ENCODE measurements at regions of chr4 and their contacts with region 1.

Region 1: DNA sequence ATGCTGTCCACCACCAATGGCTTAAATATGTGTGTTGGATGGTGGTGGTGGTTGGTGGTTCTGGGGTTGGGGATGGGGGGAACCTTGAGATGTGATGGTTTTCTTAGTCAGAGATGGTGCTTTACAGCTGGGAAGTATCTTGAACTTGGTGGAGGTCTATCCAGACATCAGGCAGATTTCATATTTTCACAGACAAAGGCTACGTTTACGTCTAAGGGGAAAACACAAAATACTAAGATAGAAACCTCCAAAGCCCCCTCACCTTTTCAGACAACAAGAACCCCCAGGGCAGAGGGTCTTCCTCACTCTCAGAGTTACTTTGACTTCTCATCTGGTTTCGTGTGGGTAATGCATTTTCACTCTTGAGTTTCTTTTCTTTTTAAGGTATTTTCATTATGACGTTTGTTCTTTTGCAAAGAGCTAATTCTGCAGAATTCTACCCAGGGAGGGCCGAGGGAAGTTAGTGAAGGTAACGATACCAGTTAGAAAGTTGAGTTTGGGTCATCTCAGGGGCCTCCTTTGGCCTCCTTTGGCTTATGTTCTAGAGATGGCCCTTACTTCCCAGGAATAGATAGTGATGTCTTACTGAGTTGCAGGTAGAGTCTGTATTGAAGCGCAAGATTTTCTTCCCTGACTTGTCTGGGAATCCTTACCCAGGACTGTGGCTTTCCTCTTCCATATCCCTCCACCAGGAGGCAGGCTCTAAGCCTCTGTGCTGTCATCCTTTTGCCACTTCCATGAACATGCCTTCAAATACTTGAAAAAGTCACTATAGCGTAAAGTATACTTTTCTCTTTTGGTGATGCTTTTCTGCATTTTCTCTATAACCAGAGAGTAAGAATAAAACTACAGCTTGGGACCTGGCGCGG is 31.9 kb downstream of the RHOH start:
- DNase-seq: peak in 3 of 9 experiments; percentile 35 to 65 (median 43)
- ATAC-seq: no peak
- H3K4me3 ChIP-seq: peak overlapping the region; percentile 3 to 25
- H3K4me3 Mint-ChIP-seq: peak overlapping the region; percentile 82
- H3K27ac ChIP-seq: peak overlapping the region; percentile 29 to 96
- H3K27ac Mint-ChIP-seq: peak overlapping the region; percentile 95
- H3K4me1 ChIP-seq: peaks cover 95% of the 10 kb centered on the region
- H3K4me1 Mint-ChIP-seq: peaks cover 94% of the 10 kb centered on the region
- H3K27me3 ChIP-seq: no peaks in the 10 kb centered on the region
- H3K27me3 Mint-ChIP-seq: no peaks in the 10 kb centered on the region
- CTCF ChIP-seq: peak; percentile 42

Region 2: DNA sequence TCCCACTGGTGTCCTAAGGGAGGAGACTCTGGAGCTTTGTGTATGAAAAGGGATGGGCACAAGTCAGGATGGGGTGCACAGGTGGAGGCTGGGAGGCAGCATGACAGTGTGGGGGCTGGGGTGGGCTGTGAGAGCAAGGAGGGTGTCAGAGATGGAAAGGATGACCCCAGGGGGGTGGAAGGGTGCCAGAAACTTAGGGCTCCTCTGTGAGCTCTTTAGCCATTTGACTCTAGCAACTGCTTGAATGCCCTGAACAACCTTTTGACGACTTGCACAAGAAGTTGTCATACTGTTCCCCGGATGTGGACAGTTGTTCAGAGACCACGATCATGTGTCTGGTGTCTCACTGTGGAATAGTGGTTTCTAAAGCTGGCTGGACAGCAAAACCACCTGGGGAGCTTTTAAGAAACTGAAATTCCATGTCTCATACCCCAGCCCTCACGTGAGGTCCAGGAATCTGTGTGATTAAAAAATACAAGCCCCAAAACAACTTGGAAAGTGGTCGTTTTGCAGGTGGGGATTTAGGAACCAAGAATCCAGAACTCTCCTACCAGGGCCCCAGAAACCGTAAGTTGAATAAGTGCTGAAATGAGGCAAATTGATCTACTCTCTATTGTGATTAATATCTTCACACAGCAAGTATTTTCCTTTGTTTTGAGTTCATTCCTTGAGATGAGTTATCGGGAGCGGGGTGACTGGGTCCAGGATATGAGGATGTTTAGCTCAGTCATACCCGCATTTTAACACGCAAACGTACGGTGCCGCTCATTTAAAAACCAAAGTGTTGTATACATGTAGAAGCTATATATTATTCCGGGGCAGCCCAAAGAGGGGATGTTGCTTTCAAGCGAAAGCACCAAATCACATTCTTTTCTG is 28.5 kb before region 1 on chr4:
- CTCF ChIA-PET with region 1: interaction called, 114 read pairs
- POLR2A ChIA-PET with region 1: interaction called, 210 read pairs
- intact Hi-C with region 1: no loop called
- DNase-seq: peak in 7 of 9 experiments; percentile 41 to 88 (median 67)
- ATAC-seq: peak; percentile 24
- H3K4me3 ChIP-seq: peak overlapping the region; percentile 83 to 87
- H3K4me3 Mint-ChIP-seq: peak overlapping the region; percentile 100
- H3K27ac ChIP-seq: peak overlapping the region; percentile 89 to 96
- H3K27ac Mint-ChIP-seq: peak overlapping the region; percentile 100
- H3K4me1 ChIP-seq: peaks cover 25% of the 10 kb centered on the region
- H3K4me1 Mint-ChIP-seq: peaks cover 41% of the 10 kb centered on the region
- H3K27me3 ChIP-seq: no peaks in the 10 kb centered on the region
- H3K27me3 Mint-ChIP-seq: no peaks in the 10 kb centered on the region
- CTCF ChIP-seq: no peak

Region 3: GRCh38 chr4:40205259-40206198 is 23.2 kb before region 1 on chr4:
- CTCF ChIA-PET with region 1: interaction called, 114 read pairs
- POLR2A ChIA-PET with region 1: interaction called, 210 read pairs
- intact Hi-C with region 1: no loop called
- DNase-seq: peak in 2 of 9 experiments; percentile 56 to 71
- ATAC-seq: peak; percentile 32
- H3K4me3 ChIP-seq: peak overlapping the region; percentile 30 to 83
- H3K4me3 Mint-ChIP-seq: peak overlapping the region; percentile 97
- H3K27ac ChIP-seq: peak overlapping the region; percentile 22 to 96
- H3K27ac Mint-ChIP-seq: peak overlapping the region; percentile 92
- H3K4me1 ChIP-seq: peaks cover 47% of the 10 kb centered on the region
- H3K4me1 Mint-ChIP-seq: peaks cover 70% of the 10 kb centered on the region
- H3K27me3 ChIP-seq: no peaks in the 10 kb centered on the region
- H3K27me3 Mint-ChIP-seq: no peaks in the 10 kb centered on the region
- CTCF ChIP-seq: no peak

Region 4: DNA sequence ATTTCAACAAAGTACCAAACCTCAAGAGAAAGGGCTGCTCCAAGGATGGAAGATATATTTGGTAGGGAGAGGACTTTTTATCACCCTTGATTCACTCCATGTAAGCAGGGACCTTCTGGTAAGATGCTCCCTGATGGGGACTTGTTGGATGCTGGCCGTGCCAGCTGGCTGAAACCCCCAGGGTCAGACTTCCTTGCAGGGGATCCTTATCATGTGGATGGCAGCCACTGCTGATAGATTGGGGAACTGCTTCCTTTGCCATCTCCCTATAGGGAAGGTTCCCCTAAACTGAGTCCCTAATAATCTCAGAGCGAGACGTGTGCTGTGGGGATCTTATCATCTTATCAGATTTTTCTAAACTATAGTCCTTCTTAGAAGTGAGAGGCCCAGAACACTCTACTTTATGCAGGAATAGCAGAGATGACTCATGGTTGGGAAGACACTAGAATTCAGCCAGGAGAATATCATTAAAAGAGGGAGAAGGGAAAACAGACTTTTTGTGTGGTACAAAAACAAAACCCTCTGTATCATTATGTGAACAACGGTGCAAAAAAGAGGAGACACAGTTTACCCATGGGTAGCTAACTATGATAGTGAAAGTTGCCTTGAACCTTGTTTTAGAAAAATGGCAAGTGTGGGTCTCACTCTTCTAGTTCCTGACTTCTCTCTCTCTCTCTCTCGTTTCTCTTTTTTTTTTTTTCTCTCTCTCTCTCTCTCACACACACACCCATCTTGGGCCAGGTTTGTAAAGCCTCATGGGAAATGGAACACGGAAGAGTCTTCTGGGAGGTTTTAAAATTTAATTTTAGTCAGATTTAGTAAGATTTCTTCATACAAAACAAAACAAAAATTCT is 15.8 kb before region 1 on chr4:
- CTCF ChIA-PET with region 1: interaction called, 114 read pairs
- POLR2A ChIA-PET with region 1: interaction called, 210 read pairs
- intact Hi-C with region 1: loop called (anchors 1 to 2 kb)
- DNase-seq: peak in 1 of 9 experiments; percentile 59
- ATAC-seq: no peak
- H3K4me3 ChIP-seq: peak overlapping the region; percentile 5 to 31
- H3K4me3 Mint-ChIP-seq: peak overlapping the region; percentile 67
- H3K27ac ChIP-seq: peak overlapping the region; percentile 42 to 96
- H3K27ac Mint-ChIP-seq: peak overlapping the region; percentile 95
- H3K4me1 ChIP-seq: peaks cover 89% of the 10 kb centered on the region
- H3K4me1 Mint-ChIP-seq: peaks cover 93% of the 10 kb centered on the region
- H3K27me3 ChIP-seq: no peaks in the 10 kb centered on the region
- H3K27me3 Mint-ChIP-seq: no peaks in the 10 kb centered on the region
- CTCF ChIP-seq: no peak

Region 5: DNA sequence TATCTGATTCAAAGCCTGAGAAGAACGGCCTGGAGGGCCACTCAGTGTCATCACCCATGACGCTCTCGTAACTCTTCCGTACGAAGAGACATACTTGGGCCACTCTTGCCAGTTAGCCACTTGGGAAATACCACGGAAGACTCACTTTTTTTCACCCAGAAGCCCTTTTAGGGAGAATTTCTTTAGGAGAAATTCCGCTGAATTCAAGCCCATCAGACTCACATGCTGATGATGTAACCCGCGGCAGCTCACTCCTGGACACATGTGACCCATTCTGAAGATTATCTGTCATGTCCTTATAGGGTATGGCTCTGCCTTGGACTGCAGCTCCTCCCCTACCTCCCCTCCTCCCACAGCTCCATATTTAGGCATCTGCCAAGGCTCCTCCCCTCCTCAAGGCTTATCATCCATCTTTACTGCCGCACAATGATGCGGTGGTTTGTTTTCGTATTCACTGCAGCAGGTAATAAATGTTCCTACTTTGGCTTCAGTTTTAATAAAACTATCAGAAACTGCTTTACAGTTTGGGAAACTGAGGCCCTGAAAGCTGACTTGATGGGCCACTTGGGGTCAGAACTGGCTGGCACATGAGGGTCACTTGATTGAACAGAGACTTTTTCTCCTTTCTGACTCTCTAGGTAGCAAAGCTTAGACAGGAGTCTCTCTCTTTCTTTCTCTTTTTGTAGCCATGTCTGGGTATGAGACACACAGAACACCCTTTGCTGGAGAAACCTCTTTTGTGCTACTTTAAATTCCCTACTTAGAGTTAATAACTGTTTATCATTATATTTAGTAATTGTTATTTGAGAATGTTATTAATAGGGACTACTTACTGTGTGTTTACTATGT is 10.2 kb after region 1 on chr4:
- CTCF ChIA-PET with region 1: interaction called, 29 read pairs
- POLR2A ChIA-PET with region 1: interaction called, 36 read pairs
- intact Hi-C with region 1: loop called in 1 of 2 experiments (anchors 1 kb)
- DNase-seq: peak; percentile 63 to 96 (median 73)
- ATAC-seq: peak; percentile 90
- H3K4me3 ChIP-seq: peak overlapping the region; percentile 46 to 48
- H3K4me3 Mint-ChIP-seq: peak overlapping the region; percentile 82
- H3K27ac ChIP-seq: peak overlapping the region; percentile 68 to 98
- H3K27ac Mint-ChIP-seq: peak overlapping the region; percentile 95
- H3K4me1 ChIP-seq: peaks cover 95% of the 10 kb centered on the region
- H3K4me1 Mint-ChIP-seq: peaks cover 94% of the 10 kb centered on the region
- H3K27me3 ChIP-seq: no peaks in the 10 kb centered on the region
- H3K27me3 Mint-ChIP-seq: no peaks in the 10 kb centered on the region
- CTCF ChIP-seq: no peak

Region 6: GRCh38 chr4:40247350-40247749 is 18.6 kb after region 1 on chr4:
- CTCF ChIA-PET with region 1: interaction called, 29 read pairs
- POLR2A ChIA-PET with region 1: interaction called, 36 read pairs
- intact Hi-C with region 1: loop called in 1 of 2 experiments (anchors 1 kb)
- DNase-seq: peak; percentile 39 to 88 (median 72)
- ATAC-seq: peak; percentile 71
- H3K4me3 ChIP-seq: no peak overlapping the region
- H3K4me3 Mint-ChIP-seq: peak overlapping the region; percentile 36
- H3K27ac ChIP-seq: peak overlapping the region; percentile 52 to 98
- H3K27ac Mint-ChIP-seq: peak overlapping the region; percentile 90
- H3K4me1 ChIP-seq: peaks cover 76% of the 10 kb centered on the region
- H3K4me1 Mint-ChIP-seq: peaks cover 82% of the 10 kb centered on the region
- H3K27me3 ChIP-seq: no peaks in the 10 kb centered on the region
- H3K27me3 Mint-ChIP-seq: no peaks in the 10 kb centered on the region
- CTCF ChIP-seq: no peak

Region 7: GRCh38 chr4:40255393-40256281 is 26.9 kb after region 1 on chr4:
- CTCF ChIA-PET with region 1: interaction called, 4 read pairs
- POLR2A ChIA-PET with region 1: interaction called, 11 read pairs
- intact Hi-C with region 1: no loop called
- DNase-seq: peak in 1 of 9 experiments; percentile 56
- ATAC-seq: peak; percentile 37
- H3K4me3 ChIP-seq: no peak overlapping the region
- H3K4me3 Mint-ChIP-seq: peak overlapping the region; percentile 43
- H3K27ac ChIP-seq: peak overlapping the region in 1 of 2 experiments; percentile 28
- H3K27ac Mint-ChIP-seq: peak overlapping the region; percentile 93
- H3K4me1 ChIP-seq: peaks cover 65% of the 10 kb centered on the region
- H3K4me1 Mint-ChIP-seq: peaks cover 73% of the 10 kb centered on the region
- H3K27me3 ChIP-seq: no peaks in the 10 kb centered on the region
- H3K27me3 Mint-ChIP-seq: no peaks in the 10 kb centered on the region
- CTCF ChIP-seq: no peak

Measured in CD8-positive, alpha-beta T cell (primary cell).